Endothelial cell of umbilical vein (primary cell): ENCODE measurements at regions of chr15 and their contacts with region 1.

Region 1: DNA sequence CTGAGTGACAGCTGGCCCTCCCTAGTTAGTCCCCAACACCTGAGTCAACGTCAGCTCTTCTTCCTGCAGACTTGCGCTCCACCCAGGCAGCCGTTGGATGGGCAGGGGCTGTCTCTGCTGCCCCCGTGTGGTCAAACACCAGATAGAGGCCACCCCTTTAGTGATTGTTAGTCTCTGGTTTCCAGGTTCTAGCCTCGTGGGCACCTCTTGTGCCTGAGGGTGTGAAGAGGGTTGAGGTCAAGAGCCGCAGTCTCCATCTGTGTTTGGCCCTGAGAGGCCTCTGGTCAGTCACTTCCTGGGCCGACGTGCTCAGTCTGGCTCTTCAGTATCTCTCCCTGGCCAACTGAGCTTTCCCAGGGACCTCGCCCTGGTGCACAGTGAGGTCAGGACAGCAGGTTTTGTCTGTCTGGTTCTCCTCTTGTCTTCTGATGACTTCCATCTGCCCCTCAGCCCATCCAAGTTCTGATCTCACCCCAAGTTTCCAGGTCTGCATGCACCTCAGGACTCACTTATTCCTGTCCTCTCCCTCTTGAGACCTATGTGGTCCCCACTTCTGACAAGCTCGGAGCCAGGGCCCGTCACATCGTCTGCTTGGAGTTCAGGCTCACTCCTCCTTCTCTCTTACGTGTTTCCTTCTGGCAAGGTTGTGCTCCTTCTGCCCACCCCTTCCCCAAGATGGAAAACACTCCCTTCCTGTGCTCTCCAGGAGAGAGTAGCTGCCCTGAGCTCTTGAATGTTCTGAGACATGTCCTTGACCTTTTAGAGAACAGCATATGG is 20.9 kb downstream of the CD276 start:
- DNase-seq: peak; percentile 52
- H3K4me3 ChIP-seq: no peak overlapping the region
- H3K27ac ChIP-seq: no peak overlapping the region
- H3K4me1 ChIP-seq: peaks cover 3% of the 10 kb centered on the region
- H3K27me3 ChIP-seq: no peaks in the 10 kb centered on the region
- CTCF ChIP-seq: peak; percentile 90 to 91
- POLR2A ChIP-seq: no peak

Region 2: GRCh38 chr15:73284090-73284716 is 420.9 kb before region 1 on chr15:
- CTCF ChIA-PET with region 1: interaction called, 15 read pairs
- POLR2A ChIA-PET with region 1: no interaction called
- dilution Hi-C with region 1: no loop called
- intact Hi-C with region 1: no loop called
- DNase-seq: peak; percentile 35
- H3K4me3 ChIP-seq: no peak overlapping the region
- H3K27ac ChIP-seq: no peak overlapping the region
- H3K4me1 ChIP-seq: no peaks in the 10 kb centered on the region
- H3K27me3 ChIP-seq: no peaks in the 10 kb centered on the region
- CTCF ChIP-seq: peak in 1 of 2 donors; percentile 13
- POLR2A ChIP-seq: no peak

Region 3: GRCh38 chr15:73677146-73677607 is 27.9 kb before region 1 on chr15:
- CTCF ChIA-PET with region 1: interaction called, 368 read pairs
- POLR2A ChIA-PET with region 1: no interaction called
- dilution Hi-C with region 1: no loop called
- intact Hi-C with region 1: loop called (anchors 1 kb)
- DNase-seq: peak; percentile 70
- H3K4me3 ChIP-seq: no peak overlapping the region
- H3K27ac ChIP-seq: no peak overlapping the region
- H3K4me1 ChIP-seq: no peaks in the 10 kb centered on the region
- H3K27me3 ChIP-seq: peaks cover 12 to 31% of the 10 kb centered on the region in 2 experiments
- CTCF ChIP-seq: peak; percentile 81
- POLR2A ChIP-seq: no peak

Region 4: DNA sequence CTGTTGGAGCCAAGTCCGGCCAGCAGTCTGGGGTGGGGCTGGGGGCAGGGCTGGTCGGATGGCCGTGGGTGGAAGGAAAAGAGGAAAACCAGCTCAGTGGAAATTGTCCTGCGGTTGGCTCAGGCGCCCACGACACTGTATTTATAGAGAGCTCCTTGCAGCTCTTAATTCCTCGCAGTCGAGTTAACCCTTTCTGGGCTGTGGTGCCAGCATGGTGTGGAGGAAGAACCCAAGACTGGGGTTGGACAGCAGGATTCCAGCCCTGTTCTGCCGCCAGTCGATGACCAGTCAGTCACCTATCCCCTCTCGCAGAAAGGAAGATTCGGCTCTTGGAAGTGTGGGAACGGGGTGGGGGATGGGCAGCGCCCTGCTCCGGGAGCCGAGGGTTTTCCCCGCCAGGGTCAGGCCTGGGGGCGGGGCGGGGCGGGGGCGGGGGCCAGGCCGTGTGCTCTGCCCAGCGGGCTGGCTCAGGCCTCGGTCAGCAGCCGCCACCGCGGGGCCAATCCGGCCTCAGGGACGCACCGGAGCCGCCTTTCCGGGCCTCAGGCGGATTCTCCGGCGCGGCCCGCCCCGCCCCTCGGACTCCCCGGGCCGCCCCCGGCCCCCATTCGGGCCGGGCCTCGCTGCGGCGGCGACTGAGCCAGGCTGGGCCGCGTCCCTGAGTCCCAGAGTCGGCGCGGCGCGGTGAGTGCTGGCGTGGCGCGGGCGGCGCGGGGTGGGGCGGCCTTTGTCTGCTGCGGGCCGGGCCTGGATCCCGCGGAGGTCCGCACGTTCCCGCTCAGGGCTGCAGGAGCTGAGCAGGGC is 21.1 kb before region 1 on chr15 and contains the start of gene CD276:
- CTCF ChIA-PET with region 1: interaction called, 368 read pairs
- POLR2A ChIA-PET with region 1: no interaction called
- dilution Hi-C with region 1: no loop called
- intact Hi-C with region 1: no loop called
- DNase-seq: peak; percentile 55
- H3K4me3 ChIP-seq: peak within 1 kb of the TSS; percentile 73 to 82 (median 79)
- H3K27ac ChIP-seq: peak within 1 kb of the TSS; percentile 51
- H3K4me1 ChIP-seq: peaks cover 43% of the 10 kb centered on the region
- H3K27me3 ChIP-seq: no peaks in the 10 kb centered on the region
- CTCF ChIP-seq: no peak
- POLR2A ChIP-seq: no peak
- total RNA-seq, gene CD276: 85.6 and 85.7 TPM in 2 replicates